ENCODE measurements at regions of chr5 and their contacts with region 1.

Region 1: GRCh38 chr5:33180900-33181299 is 259.9 kb upstream of the TARS1 start:
- DNase-seq: peak; percentile 66
- ATAC-seq: peak; percentile 73
- H3K4me3 ChIP-seq: no peak overlapping the region
- H3K27ac ChIP-seq: no peak overlapping the region
- H3K4me1 ChIP-seq: 0 out of 2 replicates have a peak, but pooled peaks cover 3% of the 10 kb centered on the region
- H3K27me3 ChIP-seq: no peaks in the 10 kb centered on the region
- CTCF ChIP-seq: peak; percentile 84

Region 2: GRCh38 chr5:32928761-32929160 is 252.1 kb before region 1 on chr5:
- CTCF ChIA-PET with region 1: no interaction called
- POLR2A ChIA-PET with region 1: no interaction called
- intact Hi-C with region 1: loop called (anchors 2 kb)
- DNase-seq: no peak
- ATAC-seq: no peak
- H3K4me3 ChIP-seq: no peak overlapping the region
- H3K27ac ChIP-seq: no peak overlapping the region
- H3K4me1 ChIP-seq: no peaks in the 10 kb centered on the region
- H3K27me3 ChIP-seq: no peaks in the 10 kb centered on the region
- CTCF ChIP-seq: no peak

Region 3: GRCh38 chr5:33257807-33258483 is 77.0 kb after region 1 on chr5:
- CTCF ChIA-PET with region 1: no interaction called
- POLR2A ChIA-PET with region 1: no interaction called
- intact Hi-C with region 1: loop called (anchors 1 kb)
- DNase-seq: peak; percentile 79
- ATAC-seq: peak; percentile 97
- H3K4me3 ChIP-seq: no peak overlapping the region
- H3K27ac ChIP-seq: peak overlapping the region; percentile 21
- H3K4me1 ChIP-seq: peaks cover 26% of the 10 kb centered on the region
- H3K27me3 ChIP-seq: no peaks in the 10 kb centered on the region
- CTCF ChIP-seq: peak; percentile 47

Region 4: DNA sequence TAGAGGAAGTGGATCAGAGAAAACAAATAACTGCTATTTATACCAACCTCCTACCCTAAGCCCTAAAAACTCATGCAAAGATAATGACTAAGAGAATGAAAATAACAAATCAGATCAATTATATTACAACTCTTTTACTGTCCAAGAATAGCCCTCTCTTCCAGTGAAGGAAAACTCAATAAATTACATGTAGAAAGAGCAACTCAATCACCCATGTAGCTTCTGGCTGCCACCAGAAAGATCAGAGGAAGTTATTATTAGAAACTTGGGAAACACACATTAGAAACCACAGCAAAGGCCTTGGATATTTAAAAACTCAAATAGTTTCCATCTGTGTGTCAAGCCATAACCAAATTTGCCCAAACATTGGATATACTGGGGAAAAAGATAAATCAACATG is 125.9 kb after region 1 on chr5:
- CTCF ChIA-PET with region 1: no interaction called
- POLR2A ChIA-PET with region 1: no interaction called
- intact Hi-C with region 1: no loop called
- DNase-seq: no peak
- ATAC-seq: no peak
- H3K4me3 ChIP-seq: no peak overlapping the region
- H3K27ac ChIP-seq: no peak overlapping the region
- H3K4me1 ChIP-seq: peaks cover 22% of the 10 kb centered on the region
- H3K27me3 ChIP-seq: no peaks in the 10 kb centered on the region
- CTCF ChIP-seq: no peak

Region 5: GRCh38 chr5:33423018-33423630 is 242.2 kb after region 1 on chr5:
- CTCF ChIA-PET with region 1: no interaction called
- POLR2A ChIA-PET with region 1: no interaction called
- intact Hi-C with region 1: loop called (anchors 2 kb)
- DNase-seq: peak; percentile 69
- ATAC-seq: peak; percentile 43; the same call in 1 of the 2 replicates
- H3K4me3 ChIP-seq: no peak overlapping the region
- H3K27ac ChIP-seq: no peak overlapping the region
- H3K4me1 ChIP-seq: no peaks in the 10 kb centered on the region
- H3K27me3 ChIP-seq: no peaks in the 10 kb centered on the region
- CTCF ChIP-seq: peak; percentile 73

Measured in PC-3 (cell line).